ENCODE measurements at regions of chr1 and their contacts with region 1.

Region 1: GRCh38 chr1:25890239-25891034 is 14.9 kb upstream of the PAQR7 start:
- DNase-seq: no peak
- H3K4me3 ChIP-seq: no peak overlapping the region
- CTCF ChIP-seq: no peak

Region 2: DNA sequence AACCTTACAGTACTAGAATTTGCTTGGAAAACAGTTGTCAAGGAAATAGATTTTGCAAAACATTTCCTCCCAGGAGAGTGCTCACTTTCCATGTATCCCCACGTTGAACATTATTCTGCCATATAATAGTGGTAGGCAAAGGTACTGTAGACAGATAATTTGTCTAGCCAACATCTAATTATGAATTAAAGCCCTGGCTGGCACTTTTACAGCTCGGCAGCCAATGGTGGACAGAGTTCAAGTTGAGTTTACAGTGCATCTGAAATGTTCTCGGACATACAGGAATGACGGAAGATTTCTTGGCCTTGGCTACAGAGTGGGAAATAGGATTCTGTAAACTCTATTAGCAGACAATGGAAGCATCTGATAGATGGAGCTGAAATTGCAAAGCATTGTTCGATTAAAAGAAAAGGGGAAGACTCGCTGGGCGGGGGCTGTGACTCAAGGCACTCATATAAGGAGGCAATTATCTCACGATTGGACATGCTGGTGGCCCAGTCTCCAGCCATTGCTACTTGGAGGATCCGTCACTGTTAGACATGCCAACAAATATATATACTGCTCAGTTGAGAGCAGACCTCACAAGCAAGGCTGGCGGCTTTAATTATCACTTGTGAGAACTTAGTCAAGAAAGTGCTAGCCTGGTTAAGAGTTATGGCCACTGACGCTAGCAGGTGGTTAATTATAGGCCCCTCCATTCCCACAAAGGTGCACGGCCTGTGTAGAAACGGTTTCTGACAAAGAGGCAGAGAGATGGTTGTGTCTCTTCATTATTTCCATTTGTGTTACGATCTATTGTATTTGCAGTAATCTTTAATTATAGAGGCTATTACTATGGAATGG is 225.9 kb before region 1 on chr1:
- CTCF ChIA-PET with region 1: no interaction called
- POLR2A ChIA-PET with region 1: no interaction called
- DNase-seq: no peak
- H3K4me3 ChIP-seq: no peak overlapping the region
- CTCF ChIP-seq: no peak

Region 3: GRCh38 chr1:25874934-25875855 is 15.2 kb before region 1 on chr1 and contains the start of gene PAQR7:
- CTCF ChIA-PET with region 1: interaction called, 24 read pairs
- POLR2A ChIA-PET with region 1: interaction called, 12 read pairs
- DNase-seq: no peak
- H3K4me3 ChIP-seq: peak within 1 kb of the TSS; percentile 74
- CTCF ChIP-seq: peak; percentile 42